ENCODE measurements at regions of chr4 and their contacts with region 1.

Region 1: GRCh38 chr4:102430461-102430910 is 70.7 kb upstream of the NFKB1 start:
- DNase-seq: peak in 1 of 14 experiments; percentile 13
- ATAC-seq: no peak
- H3K4me3 ChIP-seq: peak overlapping the region; percentile 66
- H3K4me3 Mint-ChIP-seq: peak overlapping the region; percentile 87
- H3K27ac ChIP-seq: no peak overlapping the region
- H3K27ac Mint-ChIP-seq: peak overlapping the region; percentile 74
- H3K4me1 ChIP-seq: no peaks in the 10 kb centered on the region
- H3K4me1 Mint-ChIP-seq: peaks cover 6% of the 10 kb centered on the region
- H3K27me3 ChIP-seq: no peaks in the 10 kb centered on the region
- H3K27me3 Mint-ChIP-seq: no peaks in the 10 kb centered on the region
- CTCF ChIP-seq: no peak

Region 2: DNA sequence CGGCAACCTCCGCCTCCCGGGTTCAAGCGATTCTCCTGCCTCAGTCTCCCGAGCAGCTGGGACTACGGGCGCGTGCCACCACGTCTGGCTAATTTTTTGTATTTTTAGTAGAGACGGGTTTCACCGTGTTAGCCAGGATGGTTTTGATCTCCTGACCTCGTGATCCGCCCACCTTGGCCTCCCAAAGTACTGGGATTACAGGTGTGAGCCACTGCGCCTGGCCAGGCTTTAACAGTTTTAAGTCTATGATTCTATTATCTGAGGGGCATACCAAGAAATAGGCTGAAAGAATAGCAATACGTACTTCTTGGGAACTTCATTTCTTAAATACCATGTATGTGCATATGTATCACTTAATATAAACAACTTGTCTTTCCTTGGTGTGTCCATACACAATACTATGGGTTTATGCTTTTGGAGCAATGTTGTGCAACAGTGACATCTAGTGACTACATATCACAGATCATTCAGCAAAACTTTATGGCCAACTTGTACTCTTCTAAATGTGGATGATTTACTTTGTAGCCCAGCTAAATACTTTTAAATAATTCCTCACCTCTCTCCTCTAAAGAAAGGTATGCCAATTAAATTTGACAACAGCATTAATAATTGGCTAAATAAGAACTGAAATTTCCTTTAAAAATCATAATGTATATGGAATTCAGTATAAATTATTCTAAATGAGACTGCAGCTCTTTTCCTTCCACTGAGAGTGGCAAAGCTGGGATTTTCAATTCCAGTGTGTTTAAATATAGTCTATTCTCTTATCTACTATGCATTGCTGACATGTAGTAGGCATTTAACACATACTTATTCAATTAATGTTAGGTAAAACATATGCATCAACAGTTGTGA is 578.6 kb after region 1 on chr4:
- CTCF ChIA-PET with region 1: interaction called, 5 read pairs
- POLR2A ChIA-PET with region 1: no interaction called
- intact Hi-C with region 1: loop called in 1 of 2 experiments (anchors 1 kb)
- DNase-seq: peak in 4 of 14 experiments; percentile 33 to 84 (median 76)
- ATAC-seq: peak; percentile 96
- H3K4me3 ChIP-seq: no peak overlapping the region
- H3K4me3 Mint-ChIP-seq: no peak overlapping the region
- H3K27ac ChIP-seq: no peak overlapping the region
- H3K27ac Mint-ChIP-seq: no peak overlapping the region
- H3K4me1 ChIP-seq: no peaks in the 10 kb centered on the region
- H3K4me1 Mint-ChIP-seq: no peaks in the 10 kb centered on the region
- H3K27me3 ChIP-seq: no peaks in the 10 kb centered on the region
- H3K27me3 Mint-ChIP-seq: no peaks in the 10 kb centered on the region
- CTCF ChIP-seq: peak; percentile 77

Region 3: DNA sequence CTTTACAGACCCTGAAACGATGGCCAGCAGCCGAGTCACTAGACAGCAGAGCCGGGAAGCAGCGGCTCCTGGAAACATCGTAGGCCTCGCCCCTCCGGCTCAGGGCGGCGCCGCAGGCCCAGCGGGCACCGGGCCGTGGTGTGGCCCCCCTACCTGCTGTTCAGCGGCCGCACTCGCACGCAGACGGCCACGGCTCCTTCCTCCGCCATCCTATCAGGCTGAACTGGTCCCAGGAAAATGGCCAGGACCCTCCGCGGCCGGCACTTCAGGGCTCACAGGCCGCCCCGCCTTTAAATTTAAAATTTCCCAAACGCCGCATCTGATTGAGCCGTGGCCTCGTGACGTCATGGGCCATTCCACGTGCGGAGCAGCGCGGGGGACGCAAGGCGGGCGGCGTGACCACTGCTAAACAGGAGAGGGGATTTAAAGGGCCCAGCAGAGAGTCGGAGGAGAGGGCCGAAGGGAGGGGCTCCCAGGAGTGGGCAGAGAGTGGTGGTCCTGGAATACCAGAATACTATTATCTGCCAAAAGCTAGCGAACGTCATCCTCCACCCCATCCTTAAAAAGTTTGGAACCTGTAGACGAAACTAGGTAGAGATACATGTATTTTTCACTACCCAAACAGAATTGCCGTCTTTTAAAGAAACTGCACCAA is 767.8 kb after region 1 on chr4 and contains the start of gene CENPE:
- CTCF ChIA-PET with region 1: interaction called, 3 read pairs
- POLR2A ChIA-PET with region 1: no interaction called
- intact Hi-C with region 1: loop called in 1 of 2 experiments (anchors 5 kb)
- DNase-seq: peak; percentile 68 to 93 (median 78)
- ATAC-seq: peak; percentile 87
- H3K4me3 ChIP-seq: peak within 1 kb of the TSS; percentile 69
- H3K4me3 Mint-ChIP-seq: peak within 1 kb of the TSS; percentile 93
- H3K27ac ChIP-seq: peak within 1 kb of the TSS; percentile 65 to 72
- H3K27ac Mint-ChIP-seq: peak within 1 kb of the TSS; percentile 90
- H3K4me1 ChIP-seq: peaks cover 13% of the 10 kb centered on the region
- H3K4me1 Mint-ChIP-seq: peaks cover 12% of the 10 kb centered on the region
- H3K27me3 ChIP-seq: no peaks in the 10 kb centered on the region
- H3K27me3 Mint-ChIP-seq: no peaks in the 10 kb centered on the region
- CTCF ChIP-seq: no peak
- total RNA-seq, gene CENPE: 2.7 to 3.2 TPM

Measured in CD4-positive, alpha-beta T cell (primary cell).